Panc1 (cell line): ENCODE measurements at regions of chr1 and their contacts with region 1.

Region 1: DNA sequence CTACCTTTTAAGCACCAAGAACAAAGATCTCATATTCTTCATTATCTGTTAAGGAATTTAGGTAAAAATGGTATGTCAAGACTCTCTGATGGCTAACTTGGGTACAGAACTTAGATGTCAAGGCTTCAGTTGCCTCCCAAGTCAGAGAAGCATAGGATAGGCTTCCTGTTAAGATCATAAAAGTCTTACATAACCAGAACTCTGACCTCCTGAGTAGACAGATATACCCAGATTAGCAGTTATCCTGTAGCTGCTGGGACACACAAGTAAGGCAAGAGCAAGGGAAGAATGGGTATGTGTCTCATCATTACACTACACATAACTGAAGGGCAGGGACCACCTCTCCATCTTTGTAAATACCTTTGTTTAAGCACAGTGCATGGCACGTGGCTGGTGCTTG is 15.4 kb upstream of the KLHL12 start:
- DNase-seq: no peak
- ATAC-seq: no peak
- H3K4me3 ChIP-seq: no peak overlapping the region
- H3K27ac ChIP-seq: no peak overlapping the region
- H3K4me1 ChIP-seq: no peaks in the 10 kb centered on the region
- H3K27me3 ChIP-seq: no peaks in the 10 kb centered on the region
- CTCF ChIP-seq: no peak

Region 2: GRCh38 chr1:202892511-202892910 is 49.9 kb before region 1 on chr1:
- CTCF ChIA-PET with region 1: no interaction called
- POLR2A ChIA-PET with region 1: interaction called, 16 read pairs
- in situ Hi-C with region 1: no loop called
- intact Hi-C with region 1: no loop called
- DNase-seq: no peak
- ATAC-seq: no peak
- H3K4me3 ChIP-seq: no peak overlapping the region
- H3K27ac ChIP-seq: no peak overlapping the region
- H3K4me1 ChIP-seq: peaks cover 9% of the 10 kb centered on the region; the same call in 1 of the 2 replicates
- H3K27me3 ChIP-seq: no peaks in the 10 kb centered on the region
- CTCF ChIP-seq: no peak

Region 3: DNA sequence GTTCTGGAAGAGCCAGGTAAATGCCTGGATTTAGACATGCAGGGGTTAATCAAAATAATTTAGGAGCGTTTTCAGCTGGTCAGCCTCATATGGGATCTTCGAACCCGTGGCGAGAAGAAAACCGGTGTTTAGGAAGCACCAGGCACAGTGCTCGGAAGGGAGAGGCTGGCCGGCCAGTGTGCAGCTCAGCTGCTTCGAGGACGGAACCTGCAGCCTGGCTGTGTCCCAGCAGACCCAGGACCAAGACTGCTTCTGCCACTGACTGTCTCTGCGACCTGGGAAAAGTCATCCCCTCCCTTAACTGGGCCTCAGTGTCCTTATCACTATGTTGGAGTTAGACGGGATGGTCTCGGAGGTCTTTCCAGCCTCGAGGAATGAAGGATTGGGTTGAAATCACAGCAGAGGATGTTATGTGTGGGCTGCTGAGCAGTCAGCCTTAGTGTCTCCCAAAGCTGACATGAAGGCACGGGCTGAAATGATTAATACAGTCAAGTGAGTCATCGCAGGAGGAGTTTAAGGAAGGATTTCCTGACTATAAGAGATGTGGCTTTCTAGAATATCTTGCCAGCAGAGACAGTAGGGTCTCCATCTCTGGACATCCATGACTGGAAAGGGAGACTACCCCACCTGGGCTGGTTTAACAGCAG is 104.7 kb after region 1 on chr1:
- CTCF ChIA-PET with region 1: no interaction called
- POLR2A ChIA-PET with region 1: no interaction called
- in situ Hi-C with region 1: no loop called
- intact Hi-C with region 1: no loop called
- DNase-seq: no peak
- ATAC-seq: no peak; the same call in 1 of the 2 replicates
- H3K4me3 ChIP-seq: no peak overlapping the region
- H3K27ac ChIP-seq: no peak overlapping the region
- H3K4me1 ChIP-seq: no peaks in the 10 kb centered on the region
- H3K27me3 ChIP-seq: no peaks in the 10 kb centered on the region
- CTCF ChIP-seq: no peak